BJ (cell line): ENCODE measurements at regions of chr10 and their contacts with region 1.

Region 1: GRCh38 chr10:112314822-112315474 is 31.7 kb downstream of the TECTB start:
- DNase-seq: no peak
- H3K4me3 ChIP-seq: no peak overlapping the region
- H3K27me3 ChIP-seq: peaks cover 4% of the 10 kb centered on the region; the same call in 1 of the 2 replicates
- CTCF ChIP-seq: peak; percentile 84

Region 2: GRCh38 chr10:112115799-112116385 is 199.1 kb before region 1 on chr10:
- CTCF ChIA-PET with region 1: interaction called, 25 read pairs
- POLR2A ChIA-PET with region 1: no interaction called
- DNase-seq: no peak
- H3K4me3 ChIP-seq: no peak overlapping the region
- H3K27me3 ChIP-seq: no peaks in the 10 kb centered on the region
- CTCF ChIP-seq: peak; percentile 85

Region 3: DNA sequence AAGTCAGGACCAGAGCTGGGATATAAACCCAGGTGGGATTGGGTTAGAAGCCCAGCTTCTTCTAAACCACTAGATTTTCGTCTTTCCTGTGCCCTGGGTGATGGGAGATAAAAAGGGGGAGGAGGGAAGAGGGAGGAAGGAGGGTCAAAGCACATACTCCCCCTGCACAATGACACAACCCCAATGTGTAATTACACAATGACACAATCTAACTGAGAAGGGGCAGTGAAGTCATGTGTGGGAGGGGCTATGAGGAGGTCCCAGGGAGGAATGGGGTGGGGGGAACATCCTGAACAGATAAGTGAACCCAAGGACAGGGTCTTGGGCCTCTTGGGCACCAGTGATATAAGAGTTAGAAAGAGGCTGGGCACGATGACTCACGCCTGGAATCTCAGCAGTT is 12.7 kb after region 1 on chr10:
- CTCF ChIA-PET with region 1: interaction called, 17 read pairs
- POLR2A ChIA-PET with region 1: no interaction called
- DNase-seq: no peak
- H3K4me3 ChIP-seq: no peak overlapping the region
- H3K27me3 ChIP-seq: 0 out of 2 replicates have a peak, but pooled peaks cover 2% of the 10 kb centered on the region
- CTCF ChIP-seq: no peak

Region 4: GRCh38 chr10:112344261-112344660 is 29.3 kb after region 1 on chr10:
- CTCF ChIA-PET with region 1: no interaction called
- POLR2A ChIA-PET with region 1: no interaction called
- DNase-seq: no peak
- H3K4me3 ChIP-seq: no peak overlapping the region
- H3K27me3 ChIP-seq: peaks cover 3% of the 10 kb centered on the region
- CTCF ChIP-seq: 0 out of 2 replicates have a peak, but pooled peaks have one; percentile 8